Esophagus muscularis mucosa (tissue), 4 donors: ENCODE measurements at regions of chr11 and their contacts with region 1.

Region 1: GRCh38 chr11:87037450-87038234 is at the start of gene TMEM135:
- DNase-seq: peak; percentile 95
- H3K4me3 ChIP-seq: peak within 1 kb of the TSS; percentile 62 to 79 (median 68)
- H3K27ac ChIP-seq: peak within 1 kb of the TSS; percentile 76 to 90 (median 86)
- H3K4me1 ChIP-seq: peaks cover 32 to 36% (median 33%) of the 10 kb centered on the region in 4 donors
- H3K27me3 ChIP-seq: no peaks in the 10 kb centered on the region
- CTCF ChIP-seq: peak in 1 of 3 experiments; percentile 14
- EP300 ChIP-seq: no peak
- POLR2A ChIP-seq: no peak
- total RNA-seq, gene TMEM135: 11.6 to 19.5 (median 14.9) TPM

Region 2: DNA sequence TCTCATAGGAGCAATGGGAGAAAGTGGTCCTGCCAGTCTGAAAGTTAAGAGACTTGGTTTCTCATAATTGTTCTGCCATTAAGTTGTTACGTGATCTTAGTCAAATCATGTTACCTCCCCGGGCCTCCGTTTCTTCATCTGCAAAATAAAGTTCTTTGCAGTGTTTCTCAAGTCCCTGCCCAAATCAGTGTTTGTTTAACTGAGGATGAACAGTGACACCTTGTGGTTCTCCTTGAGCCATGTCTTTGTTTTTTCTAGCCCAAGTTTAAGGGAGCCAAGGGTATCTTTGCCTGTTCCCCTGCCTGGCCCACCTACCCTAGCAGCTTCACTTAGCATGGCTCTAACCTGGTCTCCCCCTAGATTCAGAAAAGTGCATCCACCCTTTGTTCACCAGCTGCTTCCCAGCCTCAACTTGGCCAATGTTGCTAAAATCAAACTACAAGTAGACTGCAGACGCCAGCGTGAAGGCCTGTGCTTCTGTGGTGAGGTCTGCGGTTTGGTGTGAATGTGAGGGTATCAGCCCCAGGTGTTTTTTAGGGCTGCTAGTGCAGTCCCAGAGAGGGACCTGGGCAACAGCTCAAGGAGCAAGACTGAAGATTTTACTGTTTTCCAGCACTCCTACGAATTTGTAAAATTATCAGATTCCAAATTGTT is 118.0 kb before region 1 on chr11:
- intact Hi-C with region 1: no loop called
- DNase-seq: no peak
- H3K4me3 ChIP-seq: no peak overlapping the region
- H3K27ac ChIP-seq: peak overlapping the region in 3 of 4 donors; percentile 10 to 40 (median 31)
- H3K4me1 ChIP-seq: peaks cover 19 to 36% (median 34%) of the 10 kb centered on the region in 4 donors
- H3K27me3 ChIP-seq: no peaks in the 10 kb centered on the region
- CTCF ChIP-seq: peak; percentile 58 to 67 (median 60)
- EP300 ChIP-seq: no peak
- POLR2A ChIP-seq: no peak

Region 3: GRCh38 chr11:86938900-86939880 is 98.5 kb before region 1 on chr11:
- intact Hi-C with region 1: loop called (anchors 5 kb)
- DNase-seq: no peak
- H3K4me3 ChIP-seq: peak overlapping the region in 1 of 4 donors; percentile 27
- H3K27ac ChIP-seq: peak overlapping the region; percentile 72 to 80 (median 77)
- H3K4me1 ChIP-seq: peaks cover 46 to 86% (median 73%) of the 10 kb centered on the region in 4 donors
- H3K27me3 ChIP-seq: no peaks in the 10 kb centered on the region
- CTCF ChIP-seq: peak; percentile 61 to 79 (median 70)
- EP300 ChIP-seq: no peak
- POLR2A ChIP-seq: no peak

Region 4: DNA sequence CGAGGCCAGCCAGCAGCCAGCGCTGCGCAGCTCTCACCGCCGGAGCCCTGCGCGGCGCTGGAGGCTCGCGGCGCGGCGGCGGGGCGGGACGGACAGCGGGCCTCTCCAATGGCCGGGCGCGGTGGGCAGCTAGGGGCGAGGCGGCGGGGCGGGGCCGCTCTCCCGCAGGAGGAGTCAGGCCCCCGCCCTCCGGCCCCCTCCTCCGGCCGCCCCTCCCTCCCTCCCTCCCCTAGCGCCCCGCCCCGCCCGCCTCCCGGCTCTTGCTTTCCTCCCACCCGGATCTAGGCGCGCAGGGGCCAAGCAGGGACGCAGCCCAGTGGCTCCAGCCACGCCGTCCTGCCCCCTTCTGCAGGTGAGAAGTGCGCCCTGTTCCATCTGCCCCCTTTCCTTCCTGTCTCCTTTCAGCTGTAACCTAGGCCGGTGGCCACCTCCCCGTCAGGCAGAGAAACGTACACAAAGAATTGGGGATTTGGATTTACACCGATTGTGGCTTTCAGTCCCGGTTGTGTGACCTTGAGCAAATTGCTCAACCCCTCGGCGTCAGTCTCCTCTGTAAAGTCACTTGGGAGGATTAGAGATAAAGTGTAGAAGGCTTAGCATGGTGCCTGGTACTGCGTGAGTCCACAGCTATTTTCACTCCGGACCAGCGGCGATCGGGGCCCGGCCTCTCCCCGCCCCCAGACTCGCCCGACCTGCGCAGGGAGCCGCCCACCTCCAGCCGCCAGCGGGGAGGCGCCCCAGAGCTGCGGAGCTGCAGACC is 82.1 kb before region 1 on chr11 and contains the start of gene FZD4:
- intact Hi-C with region 1: loop called (anchors 5 kb)
- DNase-seq: no peak
- H3K4me3 ChIP-seq: peak within 1 kb of the TSS; percentile 73 to 97 (median 94)
- H3K27ac ChIP-seq: peak within 1 kb of the TSS; percentile 91 to 95 (median 94)
- H3K4me1 ChIP-seq: peaks cover 42 to 55% (median 49%) of the 10 kb centered on the region in 4 donors
- H3K27me3 ChIP-seq: no peaks in the 10 kb centered on the region
- CTCF ChIP-seq: peak; percentile 45 to 47 (median 46)
- EP300 ChIP-seq: no peak
- POLR2A ChIP-seq: no peak
- total RNA-seq, gene FZD4: 23.7 to 42.3 (median 31.8) TPM

Region 5: GRCh38 chr11:86999859-87000753 is 37.5 kb before region 1 on chr11:
- intact Hi-C with region 1: loop called (anchors 5 kb)
- DNase-seq: no peak
- H3K4me3 ChIP-seq: no peak overlapping the region
- H3K27ac ChIP-seq: no peak overlapping the region
- H3K4me1 ChIP-seq: no peaks in the 10 kb centered on the region
- H3K27me3 ChIP-seq: no peaks in the 10 kb centered on the region
- CTCF ChIP-seq: no peak
- EP300 ChIP-seq: no peak
- POLR2A ChIP-seq: no peak

Region 6: GRCh38 chr11:87150936-87151335 is 113.3 kb after region 1 on chr11:
- intact Hi-C with region 1: no loop called
- DNase-seq: no peak
- H3K4me3 ChIP-seq: no peak overlapping the region
- H3K27ac ChIP-seq: no peak overlapping the region
- H3K4me1 ChIP-seq: peaks cover 0 to 5% (median 0%) of the 10 kb centered on the region in 4 donors
- H3K27me3 ChIP-seq: no peaks in the 10 kb centered on the region
- CTCF ChIP-seq: no peak
- EP300 ChIP-seq: no peak
- POLR2A ChIP-seq: no peak

Region 7: GRCh38 chr11:87259736-87260135 is 222.1 kb after region 1 on chr11:
- intact Hi-C with region 1: loop called (anchors 5 kb)
- DNase-seq: no peak
- H3K4me3 ChIP-seq: no peak overlapping the region
- H3K27ac ChIP-seq: no peak overlapping the region
- H3K4me1 ChIP-seq: peaks cover 0 to 19% (median 10%) of the 10 kb centered on the region in 4 donors
- H3K27me3 ChIP-seq: no peaks in the 10 kb centered on the region
- CTCF ChIP-seq: no peak
- EP300 ChIP-seq: no peak
- POLR2A ChIP-seq: no peak